ENCODE measurements at regions of chr9 and their contacts with region 1.

Region 1: DNA sequence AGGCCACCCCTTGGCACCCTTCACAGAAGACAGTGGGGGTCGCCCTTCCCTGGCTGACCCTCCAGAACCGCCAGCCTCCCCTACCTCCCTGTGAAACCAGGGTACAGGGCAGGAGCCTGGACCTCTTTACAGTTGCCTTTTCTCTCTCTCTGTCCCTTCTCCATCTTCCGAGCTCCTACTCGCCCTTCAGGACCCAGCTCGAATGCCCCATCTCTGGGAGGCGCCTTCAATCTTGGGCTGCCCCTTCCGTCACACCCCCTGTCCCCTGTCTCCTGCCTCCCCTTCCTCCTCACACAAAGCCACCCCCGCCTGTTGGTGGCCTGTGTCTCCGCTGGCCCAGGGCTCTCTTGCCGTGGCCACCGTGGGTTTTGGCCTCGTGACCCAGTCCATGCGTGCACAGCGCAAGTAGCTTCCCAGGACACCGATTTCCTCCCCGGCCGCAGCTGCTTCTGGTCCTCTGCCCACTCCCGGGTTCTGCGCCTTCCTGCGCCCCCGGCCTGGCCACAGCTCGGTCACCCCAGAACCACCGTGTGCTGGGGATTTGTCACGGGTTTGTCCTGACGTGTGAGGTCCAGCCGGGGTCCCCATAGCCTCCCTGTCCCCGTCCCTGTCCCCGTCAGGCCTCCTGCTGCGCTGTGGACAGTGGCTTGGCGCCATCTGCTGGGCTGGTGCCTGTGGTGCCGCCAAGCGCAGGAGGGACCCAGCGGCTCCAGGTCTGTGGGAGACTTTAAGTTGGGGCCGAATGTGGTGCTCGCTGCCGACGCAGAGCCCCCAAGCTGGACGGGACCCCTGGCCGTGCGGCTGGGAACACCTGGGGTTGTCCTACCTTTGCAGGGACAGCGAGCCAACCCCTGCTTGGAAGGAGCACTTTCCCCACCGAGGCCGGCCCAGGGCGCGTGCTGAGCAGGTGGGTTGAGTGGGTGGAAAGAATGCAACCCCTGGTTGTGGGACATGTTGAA is 4.0 kb upstream of the TMEM250 start:
- DNase-seq: no peak
- ATAC-seq: peak; percentile 22; the same call in 1 of the 2 replicates
- H3K4me3 ChIP-seq: no peak overlapping the region
- H3K27ac ChIP-seq: no peak overlapping the region
- H3K4me1 ChIP-seq: peaks cover 11 to 24% of the 10 kb centered on the region in 2 experiments
- H3K27me3 ChIP-seq: no peaks in the 10 kb centered on the region
- CTCF ChIP-seq: peak in 2 of 3 experiments; percentile 95; a peak in 4 of 6 replicates
- POLR2A ChIP-seq: no peak
- RAD21 ChIP-seq: no peak

Region 2: GRCh38 chr9:135602789-135603481 is 519.8 kb before region 1 on chr9:
- CTCF ChIA-PET with region 1: interaction called, 7 read pairs
- POLR2A ChIA-PET with region 1: no interaction called
- RAD21 ChIA-PET with region 1: no interaction called
- intact Hi-C with region 1: loop called (anchors 5 kb)
- DNase-seq: peak; percentile 29
- ATAC-seq: peak; percentile 66
- H3K4me3 ChIP-seq: no peak overlapping the region
- H3K27ac ChIP-seq: no peak overlapping the region
- H3K4me1 ChIP-seq: peaks cover 0 to 4% of the 10 kb centered on the region in 2 experiments; a peak in 2 of 4 replicates
- H3K27me3 ChIP-seq: no peaks in the 10 kb centered on the region
- CTCF ChIP-seq: peak; percentile 71 to 75 (median 75)
- POLR2A ChIP-seq: no peak
- RAD21 ChIP-seq: peak; percentile 45

Region 3: DNA sequence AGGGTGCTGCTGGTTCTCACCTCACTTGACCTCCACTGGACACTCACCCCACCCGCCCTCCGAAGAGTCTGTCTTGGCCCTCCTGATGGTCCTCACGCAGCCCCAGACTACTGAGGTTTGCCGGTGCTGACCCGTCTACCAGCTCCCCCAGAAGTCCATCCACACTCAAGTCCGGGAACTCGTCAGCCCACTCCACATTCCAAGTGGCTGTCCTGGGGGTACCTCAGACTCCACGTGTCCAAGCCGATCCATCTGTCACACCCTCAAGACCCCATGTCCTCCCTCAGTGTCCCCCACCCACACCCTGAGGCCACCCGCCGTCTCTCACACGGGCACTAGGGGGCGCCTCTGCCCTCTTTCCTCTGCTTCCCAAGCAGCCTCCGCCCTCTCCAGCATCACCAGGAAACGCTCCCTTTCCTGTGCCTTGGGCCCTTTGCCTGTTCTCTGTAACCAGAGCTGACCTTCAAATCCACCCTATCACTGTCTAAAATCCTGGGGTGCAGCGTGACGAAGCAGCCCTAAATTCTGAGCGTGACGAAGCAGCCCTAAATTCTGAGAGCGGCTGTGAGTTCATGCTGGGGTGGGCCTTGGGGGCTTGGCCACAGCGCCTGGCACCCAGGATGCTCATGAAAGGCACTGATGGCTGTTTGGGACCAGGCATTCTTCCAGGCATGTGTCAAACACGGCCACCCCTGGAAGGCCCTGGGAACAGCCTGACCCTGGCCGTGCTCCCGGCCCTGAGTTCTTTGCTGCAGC is 325.0 kb before region 1 on chr9:
- CTCF ChIA-PET with region 1: interaction called, 7 read pairs
- POLR2A ChIA-PET with region 1: no interaction called
- RAD21 ChIA-PET with region 1: no interaction called
- intact Hi-C with region 1: loop called (anchors 1 kb)
- DNase-seq: peak; percentile 24
- ATAC-seq: peak; percentile 91
- H3K4me3 ChIP-seq: no peak overlapping the region
- H3K27ac ChIP-seq: no peak overlapping the region
- H3K4me1 ChIP-seq: peaks cover 0 to 4% of the 10 kb centered on the region in 2 experiments; a peak in 1 of 4 replicates
- H3K27me3 ChIP-seq: no peaks in the 10 kb centered on the region
- CTCF ChIP-seq: peak; percentile 74 to 95 (median 87)
- POLR2A ChIP-seq: no peak
- RAD21 ChIP-seq: peak; percentile 79

Region 4: DNA sequence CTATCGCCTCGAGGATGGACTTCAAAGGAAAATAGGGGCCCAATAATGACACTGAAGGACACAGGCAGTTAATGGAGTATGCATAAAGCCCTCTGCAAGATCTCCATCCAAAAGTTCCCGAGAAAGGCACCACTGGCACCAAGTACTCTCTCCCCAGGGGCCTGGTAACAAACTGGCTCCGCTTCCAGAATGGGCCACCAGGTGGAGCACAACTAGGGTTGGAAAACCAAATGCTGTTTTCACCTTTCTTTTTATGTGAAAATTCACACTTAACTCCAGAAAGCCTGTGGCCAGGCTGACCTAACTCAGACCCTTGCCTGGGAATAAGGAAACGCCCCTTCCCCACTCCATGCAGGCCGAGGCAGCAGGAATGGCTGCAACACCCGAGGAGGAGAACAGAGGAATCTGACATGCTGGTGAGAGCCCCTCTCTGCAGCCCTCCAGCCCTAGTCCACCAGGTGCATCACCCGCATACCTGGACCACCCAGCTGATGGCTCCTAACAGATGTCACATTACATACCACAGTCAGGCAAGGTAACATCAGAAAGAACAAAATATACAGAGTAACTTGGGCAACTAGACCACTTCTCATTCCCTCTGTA is 258.2 kb before region 1 on chr9:
- CTCF ChIA-PET with region 1: no interaction called
- POLR2A ChIA-PET with region 1: no interaction called
- RAD21 ChIA-PET with region 1: no interaction called
- intact Hi-C with region 1: loop called (anchors 1 kb)
- DNase-seq: peak; percentile 31
- ATAC-seq: peak; percentile 87
- H3K4me3 ChIP-seq: no peak overlapping the region
- H3K27ac ChIP-seq: no peak overlapping the region
- H3K4me1 ChIP-seq: no peaks in the 10 kb centered on the region; a peak in 1 of 4 replicates
- H3K27me3 ChIP-seq: no peaks in the 10 kb centered on the region
- CTCF ChIP-seq: peak; percentile 52 to 94 (median 91)
- POLR2A ChIP-seq: no peak
- RAD21 ChIP-seq: peak; percentile 55

Region 5: DNA sequence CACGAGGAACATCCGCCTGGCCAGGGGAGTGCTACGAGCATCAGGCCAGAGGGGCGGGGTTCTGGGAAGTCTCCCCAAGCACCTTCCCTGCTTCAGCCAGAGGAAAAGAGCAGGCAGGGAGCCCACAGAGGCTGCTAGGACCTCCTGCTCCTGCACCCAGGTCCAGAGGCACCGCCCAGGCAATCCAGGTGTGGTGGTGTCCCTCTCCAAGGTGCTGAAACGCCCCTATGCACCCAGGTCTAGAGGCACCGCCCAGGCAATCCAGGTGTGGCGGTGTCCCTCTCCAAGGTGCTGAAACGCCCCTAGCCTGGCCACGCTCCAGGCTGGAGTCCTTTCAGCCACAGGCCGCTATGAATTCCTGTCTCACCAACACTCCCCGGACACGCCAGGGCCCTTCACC is 150.8 kb before region 1 on chr9:
- CTCF ChIA-PET with region 1: interaction called, 40 read pairs
- POLR2A ChIA-PET with region 1: no interaction called
- RAD21 ChIA-PET with region 1: interaction called, 3 to 8 read pairs
- intact Hi-C with region 1: loop called (anchors 1 kb)
- DNase-seq: peak; percentile 67
- ATAC-seq: peak; percentile 87
- H3K4me3 ChIP-seq: no peak overlapping the region
- H3K27ac ChIP-seq: no peak overlapping the region
- H3K4me1 ChIP-seq: peaks cover 0 to 3% of the 10 kb centered on the region in 2 experiments; a peak in 1 of 4 replicates
- H3K27me3 ChIP-seq: peaks cover 4% of the 10 kb centered on the region; the same call in 1 of the 2 replicates
- CTCF ChIP-seq: no peak
- POLR2A ChIP-seq: no peak
- RAD21 ChIP-seq: no peak

Region 6: GRCh38 chr9:136062659-136063439 is 59.9 kb before region 1 on chr9:
- CTCF ChIA-PET with region 1: no interaction called
- POLR2A ChIA-PET with region 1: no interaction called
- RAD21 ChIA-PET with region 1: no interaction called
- intact Hi-C with region 1: no loop called
- DNase-seq: no peak
- ATAC-seq: no peak
- H3K4me3 ChIP-seq: no peak overlapping the region
- H3K27ac ChIP-seq: no peak overlapping the region
- H3K4me1 ChIP-seq: no peaks in the 10 kb centered on the region
- H3K27me3 ChIP-seq: no peaks in the 10 kb centered on the region
- CTCF ChIP-seq: no peak
- POLR2A ChIP-seq: no peak
- RAD21 ChIP-seq: no peak

Region 7: GRCh38 chr9:136089697-136090045 is 33.0 kb before region 1 on chr9:
- CTCF ChIA-PET with region 1: interaction called, 30 read pairs
- POLR2A ChIA-PET with region 1: no interaction called
- RAD21 ChIA-PET with region 1: interaction called, 3 to 6 read pairs
- intact Hi-C with region 1: loop called (anchors 1 kb)
- DNase-seq: no peak
- ATAC-seq: no peak
- H3K4me3 ChIP-seq: no peak overlapping the region
- H3K27ac ChIP-seq: no peak overlapping the region
- H3K4me1 ChIP-seq: peaks cover 29 to 42% of the 10 kb centered on the region in 2 experiments
- H3K27me3 ChIP-seq: no peaks in the 10 kb centered on the region
- CTCF ChIP-seq: peak in 2 of 3 experiments; percentile 22 to 50; a peak in 3 of 6 replicates
- POLR2A ChIP-seq: no peak
- RAD21 ChIP-seq: no peak